Activated CD4-positive, alpha-beta T cell treated with anti-CD3 and anti-CD28 coated beads, Interleukin-2, amount 10 ng/mL, durations not matched to agents 24 days and 14 days (primary cell): ENCODE measurements at regions of chr6 and their contacts with region 1.

Region 1: DNA sequence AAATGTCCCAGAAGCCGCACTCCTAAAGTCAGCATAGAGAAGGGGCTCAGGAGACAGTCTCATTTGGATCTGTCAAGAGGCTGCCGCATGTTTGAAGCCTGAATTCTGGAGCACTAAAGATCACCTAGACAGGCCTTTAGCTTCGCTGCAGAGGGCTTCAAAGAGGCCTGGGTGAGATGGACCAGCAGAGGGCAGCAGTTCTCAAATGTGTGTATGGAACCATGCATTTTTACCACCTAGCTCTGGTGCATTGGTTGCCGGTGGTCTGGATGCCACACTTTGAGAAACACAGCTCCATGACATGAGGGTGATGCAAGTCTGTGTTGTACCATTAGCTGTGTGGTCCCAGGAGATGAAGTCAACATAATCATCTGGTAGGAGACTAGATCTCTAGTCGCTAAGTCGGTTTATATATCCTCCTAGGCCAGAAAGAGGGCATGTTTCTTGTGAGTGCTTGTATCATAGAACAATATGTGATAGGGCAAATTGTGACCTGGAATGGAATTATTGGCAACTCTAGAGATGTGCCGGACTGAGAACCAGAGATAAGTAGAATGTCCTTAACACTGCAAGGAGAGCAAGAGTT is 64.8 kb downstream of the KIAA0319 start:
- DNase-seq: peak; percentile 92
- H3K4me3 Mint-ChIP-seq: no peak overlapping the region
- H3K27ac Mint-ChIP-seq: no peak overlapping the region
- H3K4me1 Mint-ChIP-seq: peaks cover 2% of the 10 kb centered on the region
- H3K27me3 Mint-ChIP-seq: peaks cover 13% of the 10 kb centered on the region

Region 2: DNA sequence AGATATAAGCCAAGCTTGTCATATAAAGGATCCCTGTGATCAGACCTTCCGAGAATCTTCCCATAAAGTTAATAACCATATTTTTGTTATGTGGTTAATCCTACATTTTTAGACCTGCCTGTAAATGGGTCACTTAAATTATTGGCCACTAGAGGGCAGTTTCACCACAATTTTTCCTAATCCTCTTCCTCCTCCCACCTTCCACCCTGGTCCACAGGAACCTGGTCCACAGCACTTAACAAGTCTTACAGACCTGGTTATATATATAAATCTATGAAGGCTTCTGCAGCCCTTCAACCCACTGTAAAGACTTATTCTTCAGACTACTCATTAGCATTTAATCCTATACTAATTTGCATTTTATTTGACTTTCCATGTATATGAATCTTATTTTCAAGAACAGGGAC is 150.1 kb before region 1 on chr6:
- intact Hi-C with region 1: no loop called
- DNase-seq: peak; percentile 75
- H3K4me3 Mint-ChIP-seq: no peak overlapping the region
- H3K27ac Mint-ChIP-seq: no peak overlapping the region
- H3K4me1 Mint-ChIP-seq: no peaks in the 10 kb centered on the region
- H3K27me3 Mint-ChIP-seq: no peaks in the 10 kb centered on the region

Region 3: GRCh38 chr6:24646782-24647181 is 65.6 kb after region 1 on chr6:
- intact Hi-C with region 1: loop called (anchors 10 kb)
- DNase-seq: no peak
- H3K4me3 Mint-ChIP-seq: peak overlapping the region; percentile 85
- H3K27ac Mint-ChIP-seq: no peak overlapping the region
- H3K4me1 Mint-ChIP-seq: peaks cover 15% of the 10 kb centered on the region
- H3K27me3 Mint-ChIP-seq: peaks cover 26% of the 10 kb centered on the region

Region 4: DNA sequence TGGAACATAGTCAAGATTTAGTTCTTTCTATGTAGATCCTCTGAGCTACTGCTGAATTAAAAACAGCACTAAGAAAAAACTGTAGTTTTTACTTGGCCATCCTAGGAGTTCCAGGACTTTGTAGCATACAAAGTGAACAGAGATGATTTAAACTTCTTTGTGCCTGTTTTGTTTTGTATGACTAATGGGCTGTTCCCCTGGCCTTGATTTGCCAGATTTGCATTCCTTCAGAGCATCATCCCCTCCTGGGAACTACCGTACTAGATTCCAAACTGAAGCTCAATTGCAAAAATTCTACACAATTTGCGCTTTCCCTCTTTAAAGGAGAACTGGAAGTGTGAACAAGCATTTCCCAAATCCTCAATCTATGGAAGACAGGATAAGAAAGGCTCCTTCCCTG is 108.8 kb after region 1 on chr6:
- intact Hi-C with region 1: loop called (anchors 1 kb)
- DNase-seq: no peak
- H3K4me3 Mint-ChIP-seq: no peak overlapping the region
- H3K27ac Mint-ChIP-seq: no peak overlapping the region
- H3K4me1 Mint-ChIP-seq: peaks cover 4% of the 10 kb centered on the region
- H3K27me3 Mint-ChIP-seq: no peaks in the 10 kb centered on the region

Region 5: GRCh38 chr6:24766680-24767462 is 185.7 kb after region 1 on chr6:
- intact Hi-C with region 1: loop called (anchors 1 kb)
- DNase-seq: no peak
- H3K4me3 Mint-ChIP-seq: no peak overlapping the region
- H3K27ac Mint-ChIP-seq: no peak overlapping the region
- H3K4me1 Mint-ChIP-seq: peaks cover 6% of the 10 kb centered on the region
- H3K27me3 Mint-ChIP-seq: no peaks in the 10 kb centered on the region

Region 6: DNA sequence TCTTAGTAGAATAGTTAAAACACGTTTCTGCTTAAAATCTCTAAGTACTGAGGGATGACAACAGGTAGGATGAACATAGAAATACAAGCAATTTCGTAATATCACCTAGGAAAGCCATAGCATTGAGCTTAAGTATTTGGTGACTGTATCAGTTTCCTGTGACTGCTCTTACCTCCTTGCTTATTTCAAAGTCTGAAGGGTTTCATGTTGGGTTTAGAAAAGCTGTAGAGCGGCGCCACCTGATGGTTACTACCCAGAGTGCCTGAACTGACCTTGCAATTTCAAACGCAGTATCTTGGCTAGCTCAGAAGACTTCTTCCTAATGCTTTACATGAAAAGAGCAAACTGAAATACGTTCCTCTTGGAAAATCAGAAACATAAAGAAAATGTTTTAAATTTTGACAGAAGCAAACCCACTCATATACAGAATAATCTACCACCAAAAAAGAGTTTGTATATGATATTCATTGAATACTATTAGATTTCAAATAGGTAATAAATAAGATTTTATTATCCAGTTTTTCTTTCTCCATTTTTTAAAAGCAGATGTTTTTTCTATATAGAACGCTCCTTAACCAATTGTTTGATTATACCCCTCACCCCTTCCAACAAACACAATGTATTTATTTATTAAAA is 436.9 kb after region 1 on chr6:
- intact Hi-C with region 1: loop called (anchors 5 kb)
- DNase-seq: peak; percentile 93
- H3K4me3 Mint-ChIP-seq: peak overlapping the region; percentile 31
- H3K27ac Mint-ChIP-seq: peak overlapping the region; percentile 84
- H3K4me1 Mint-ChIP-seq: peaks cover 33% of the 10 kb centered on the region
- H3K27me3 Mint-ChIP-seq: no peaks in the 10 kb centered on the region